MCF 10A (cell line): ENCODE measurements at regions of chr2 and their contacts with region 1.

Region 1: GRCh38 chr2:73939419-73939818 is 12.7 kb downstream of the DGUOK start:
- DNase-seq: peak; percentile 91
- H3K4me3 Mint-ChIP-seq: peak overlapping the region; percentile 30
- H3K27ac Mint-ChIP-seq: peak overlapping the region; percentile 91
- H3K4me1 Mint-ChIP-seq: peaks cover 38% of the 10 kb centered on the region
- H3K27me3 Mint-ChIP-seq: no peaks in the 10 kb centered on the region
- CTCF ChIP-seq: peak; percentile 54

Region 2: DNA sequence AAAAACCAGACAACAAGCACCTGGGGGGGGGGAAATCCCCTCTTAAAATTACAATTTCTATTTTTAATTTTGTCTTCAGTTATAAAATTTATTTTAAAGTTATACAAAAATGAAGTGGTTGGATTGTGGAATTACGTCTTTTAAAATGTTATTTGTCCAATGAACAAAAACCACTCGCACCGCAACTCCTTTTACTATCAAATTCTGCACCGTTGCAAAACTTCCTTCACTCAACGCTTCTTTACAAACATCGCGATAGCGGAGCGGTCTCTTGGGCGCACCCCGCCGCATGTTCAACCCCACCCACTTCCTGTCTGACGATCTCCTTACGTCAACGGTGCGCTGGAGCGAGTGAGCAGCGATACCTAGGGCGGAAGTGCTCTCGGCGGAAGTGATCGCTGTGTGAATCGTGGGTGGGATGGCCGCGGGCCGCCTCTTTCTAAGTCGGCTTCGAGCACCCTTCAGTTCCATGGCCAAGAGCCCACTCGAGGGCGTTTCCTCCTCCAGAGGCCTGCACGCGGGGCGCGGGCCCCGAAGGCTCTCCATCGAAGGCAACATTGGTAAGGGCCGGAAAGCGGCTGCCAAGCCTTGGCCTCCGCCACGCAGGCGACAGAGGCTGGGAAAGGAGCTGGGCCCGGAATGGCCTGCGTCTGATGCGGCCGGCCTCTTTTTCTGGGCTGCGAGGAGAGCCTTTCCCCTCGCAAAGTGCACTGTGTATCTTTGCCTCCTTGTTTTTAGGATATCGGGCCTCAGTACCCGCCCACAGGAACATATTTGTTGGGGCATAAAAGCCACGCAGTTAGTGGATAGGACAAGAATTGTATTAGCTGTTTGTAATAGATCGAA is 12.7 kb before region 1 on chr2 and contains the start of gene DGUOK:
- CTCF ChIA-PET with region 1: interaction called, 3 read pairs
- POLR2A ChIA-PET with region 1: interaction called, 30 read pairs
- intact Hi-C with region 1: no loop called
- DNase-seq: peak; percentile 99
- H3K4me3 Mint-ChIP-seq: peak within 1 kb of the TSS; percentile 85
- H3K27ac Mint-ChIP-seq: peak within 1 kb of the TSS; percentile 97
- H3K4me1 Mint-ChIP-seq: peaks cover 47% of the 10 kb centered on the region
- H3K27me3 Mint-ChIP-seq: no peaks in the 10 kb centered on the region
- CTCF ChIP-seq: no peak
- total RNA-seq, gene DGUOK: 74.4 and 92.3 TPM in 2 replicates

Region 3: GRCh38 chr2:74002487-74003391 is 63.3 kb after region 1 on chr2:
- CTCF ChIA-PET with region 1: interaction called, 6 read pairs
- POLR2A ChIA-PET with region 1: no interaction called
- intact Hi-C with region 1: loop called (anchors 1 kb)
- DNase-seq: peak; percentile 82
- H3K4me3 Mint-ChIP-seq: peak overlapping the region; percentile 72
- H3K27ac Mint-ChIP-seq: no peak overlapping the region
- H3K4me1 Mint-ChIP-seq: peaks cover 67% of the 10 kb centered on the region
- H3K27me3 Mint-ChIP-seq: no peaks in the 10 kb centered on the region
- CTCF ChIP-seq: no peak

Region 4: GRCh38 chr2:74147727-74148456 is 208.5 kb after region 1 on chr2 and contains the start of gene BOLA3:
- CTCF ChIA-PET with region 1: interaction called, 8 read pairs
- POLR2A ChIA-PET with region 1: interaction called, 3 read pairs
- intact Hi-C with region 1: loop called (anchors 2 kb)
- DNase-seq: peak; percentile 80
- H3K4me3 Mint-ChIP-seq: no peak within 1 kb of the TSS
- H3K27ac Mint-ChIP-seq: no peak within 1 kb of the TSS
- H3K4me1 Mint-ChIP-seq: no peaks in the 10 kb centered on the region
- H3K27me3 Mint-ChIP-seq: no peaks in the 10 kb centered on the region
- CTCF ChIP-seq: peak; percentile 70
- total RNA-seq, gene BOLA3: 72.5 and 83.8 TPM in 2 replicates

Region 5: DNA sequence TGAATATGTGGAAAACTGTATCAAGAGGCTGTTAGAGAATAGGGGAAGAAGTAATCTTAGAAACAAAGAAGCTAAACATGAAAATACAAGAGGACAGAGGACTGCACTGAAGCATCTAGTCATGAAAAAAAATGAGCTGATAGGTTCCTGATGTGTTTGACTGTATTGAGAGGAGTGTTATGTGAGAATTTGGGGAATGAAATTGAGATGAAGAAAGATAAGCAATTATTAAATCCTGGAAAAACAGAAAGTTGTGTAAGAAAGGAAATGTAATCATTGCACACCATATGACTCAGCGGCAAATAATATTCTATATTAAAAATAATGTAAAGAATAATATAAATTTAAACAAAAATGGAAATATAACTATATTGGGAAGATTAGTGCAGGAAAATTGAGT is 785.9 kb after region 1 on chr2:
- CTCF ChIA-PET with region 1: no interaction called
- POLR2A ChIA-PET with region 1: no interaction called
- intact Hi-C with region 1: no loop called
- DNase-seq: no peak
- H3K4me3 Mint-ChIP-seq: no peak overlapping the region
- H3K27ac Mint-ChIP-seq: no peak overlapping the region
- H3K4me1 Mint-ChIP-seq: no peaks in the 10 kb centered on the region
- H3K27me3 Mint-ChIP-seq: no peaks in the 10 kb centered on the region
- CTCF ChIP-seq: no peak